ENCODE measurements at regions of chr10 and their contacts with region 1.

Region 1: DNA sequence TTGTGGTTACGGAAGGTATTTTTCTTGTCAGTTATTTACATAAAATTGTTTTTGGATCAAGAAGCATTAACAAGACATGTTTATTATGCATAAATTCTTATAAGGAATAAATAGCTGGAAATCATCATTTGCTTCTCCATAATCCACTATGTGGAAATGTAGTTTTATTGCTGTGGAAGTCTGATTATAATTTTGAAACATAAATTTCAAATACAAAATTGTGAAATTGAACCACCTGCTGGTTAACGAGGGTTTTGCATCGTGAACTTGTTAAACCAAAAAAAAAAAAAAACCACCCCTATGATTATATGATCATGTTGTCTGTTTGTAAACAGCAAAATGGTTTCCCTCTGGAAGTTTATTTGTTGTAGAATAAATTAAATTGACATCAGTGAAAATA is 25.9 kb downstream of the ABRAXAS2 start:
- DNase-seq: no peak
- H3K4me3 ChIP-seq: no peak overlapping the region
- H3K27ac ChIP-seq: no peak overlapping the region
- H3K4me1 ChIP-seq: no peaks in the 10 kb centered on the region
- H3K27me3 ChIP-seq: no peaks in the 10 kb centered on the region
- CTCF ChIP-seq: peak; percentile 57

Region 2: DNA sequence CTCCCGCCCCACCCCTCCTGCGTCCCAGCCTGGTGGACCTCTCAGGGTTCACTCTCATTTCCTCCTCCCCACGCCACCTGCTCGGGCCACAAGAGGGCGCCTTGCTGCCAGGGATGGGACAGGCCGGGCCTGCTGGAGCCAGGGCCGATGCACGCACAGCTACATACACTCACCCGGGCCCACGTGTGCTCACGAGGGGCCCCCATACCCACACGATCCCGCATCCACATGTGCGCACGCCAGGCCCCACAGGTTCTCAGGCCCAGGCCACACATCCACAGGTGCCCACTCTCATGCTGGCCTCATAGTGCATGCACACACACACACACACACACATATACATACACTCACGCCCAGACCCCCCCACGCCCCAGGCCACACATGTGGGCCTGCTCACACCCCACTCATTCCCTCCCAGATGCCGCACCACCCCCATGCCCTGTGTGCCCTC is 297.2 kb before region 1 on chr10:
- intact Hi-C with region 1: loop called (anchors 5 kb)
- DNase-seq: peak; percentile 90
- H3K4me3 ChIP-seq: no peak overlapping the region
- H3K27ac ChIP-seq: no peak overlapping the region
- H3K4me1 ChIP-seq: no peaks in the 10 kb centered on the region
- H3K27me3 ChIP-seq: no peaks in the 10 kb centered on the region
- CTCF ChIP-seq: peak; percentile 79